ENCODE measurements at regions of chr1 and their contacts with region 1.

Region 1: DNA sequence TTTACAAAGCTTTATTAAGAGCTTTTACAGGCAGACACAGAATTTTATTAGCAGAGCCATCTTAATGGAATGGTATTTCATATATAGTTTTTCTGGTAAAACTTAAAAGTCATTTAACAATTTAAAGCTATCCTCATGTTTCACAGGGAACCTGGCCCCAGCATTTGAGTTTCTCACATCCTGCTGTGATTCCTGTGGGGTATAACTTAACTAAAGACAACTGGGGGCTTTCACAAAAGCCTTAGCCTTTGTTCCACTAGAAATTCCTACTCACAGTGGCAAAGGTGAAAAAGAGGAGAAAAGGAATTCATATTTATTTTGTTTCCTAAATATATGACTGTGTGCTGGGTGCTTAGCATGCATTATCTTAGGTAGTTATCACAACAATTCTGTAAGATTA is 233.9 kb downstream of the DENND1B start:
- DNase-seq: no peak
- H3K4me3 ChIP-seq: no peak overlapping the region
- CTCF ChIP-seq: no peak

Region 2: GRCh38 chr1:197521118-197521739 is 20.2 kb before region 1 on chr1:
- CTCF ChIA-PET with region 1: interaction called, 55 read pairs
- POLR2A ChIA-PET with region 1: no interaction called
- DNase-seq: no peak
- H3K4me3 ChIP-seq: no peak overlapping the region
- CTCF ChIP-seq: peak; percentile 62

Region 3: DNA sequence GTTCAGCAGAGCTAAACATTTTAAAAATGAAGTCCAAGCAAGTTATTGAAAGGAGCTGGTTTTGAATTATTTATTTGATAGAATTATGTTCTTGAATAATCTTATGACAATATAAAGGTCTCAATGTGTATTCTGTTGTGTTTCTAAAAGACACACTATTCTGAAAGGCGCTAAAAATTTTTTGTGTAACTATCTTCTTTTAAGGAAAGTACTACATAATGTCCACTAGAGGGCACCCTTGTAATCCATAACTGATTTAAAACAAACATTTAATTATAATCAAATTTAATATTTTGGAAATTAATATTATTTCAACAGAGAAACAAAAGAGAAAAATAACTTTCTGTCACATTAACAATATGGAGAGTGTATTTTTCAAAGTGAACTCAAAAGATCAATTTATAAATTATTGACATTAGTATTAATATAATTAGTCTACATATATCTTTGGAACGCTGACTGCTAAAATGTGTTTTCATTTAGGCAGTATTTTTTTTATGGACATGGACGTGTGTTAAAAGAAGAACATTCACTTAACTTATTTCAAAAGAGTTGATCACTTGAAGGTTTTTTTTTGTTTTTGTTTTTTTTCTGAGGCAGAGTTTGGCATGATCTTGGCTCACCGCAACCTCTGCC is 14.6 kb before region 1 on chr1:
- CTCF ChIA-PET with region 1: interaction called, 55 read pairs
- POLR2A ChIA-PET with region 1: no interaction called
- DNase-seq: no peak
- H3K4me3 ChIP-seq: no peak overlapping the region
- CTCF ChIP-seq: peak; percentile 2

Region 4: GRCh38 chr1:197577580-197577979 is 36.2 kb after region 1 on chr1:
- CTCF ChIA-PET with region 1: no interaction called
- POLR2A ChIA-PET with region 1: no interaction called
- DNase-seq: peak; percentile 24
- H3K4me3 ChIP-seq: no peak overlapping the region
- CTCF ChIP-seq: no peak

Region 5: DNA sequence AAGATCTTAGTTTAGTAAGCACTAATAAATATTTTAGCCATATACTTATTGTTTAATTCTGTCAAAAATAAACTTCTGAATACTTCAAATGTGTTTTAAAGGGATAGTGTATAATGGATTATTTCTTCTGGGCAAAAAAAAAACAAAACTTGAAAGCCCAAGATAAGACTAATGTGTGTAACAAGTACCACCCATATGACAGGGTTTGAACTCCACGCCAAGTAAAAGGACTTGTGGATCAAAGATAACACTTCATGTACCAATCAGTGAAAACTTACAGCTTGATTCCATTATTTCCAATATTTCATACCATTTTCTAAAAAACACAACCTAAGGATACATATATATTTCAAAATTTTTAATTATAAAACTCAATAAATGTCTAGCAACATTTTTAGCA is 174.4 kb after region 1 on chr1:
- CTCF ChIA-PET with region 1: no interaction called
- POLR2A ChIA-PET with region 1: no interaction called
- DNase-seq: no peak
- H3K4me3 ChIP-seq: no peak overlapping the region
- CTCF ChIP-seq: no peak

Region 6: DNA sequence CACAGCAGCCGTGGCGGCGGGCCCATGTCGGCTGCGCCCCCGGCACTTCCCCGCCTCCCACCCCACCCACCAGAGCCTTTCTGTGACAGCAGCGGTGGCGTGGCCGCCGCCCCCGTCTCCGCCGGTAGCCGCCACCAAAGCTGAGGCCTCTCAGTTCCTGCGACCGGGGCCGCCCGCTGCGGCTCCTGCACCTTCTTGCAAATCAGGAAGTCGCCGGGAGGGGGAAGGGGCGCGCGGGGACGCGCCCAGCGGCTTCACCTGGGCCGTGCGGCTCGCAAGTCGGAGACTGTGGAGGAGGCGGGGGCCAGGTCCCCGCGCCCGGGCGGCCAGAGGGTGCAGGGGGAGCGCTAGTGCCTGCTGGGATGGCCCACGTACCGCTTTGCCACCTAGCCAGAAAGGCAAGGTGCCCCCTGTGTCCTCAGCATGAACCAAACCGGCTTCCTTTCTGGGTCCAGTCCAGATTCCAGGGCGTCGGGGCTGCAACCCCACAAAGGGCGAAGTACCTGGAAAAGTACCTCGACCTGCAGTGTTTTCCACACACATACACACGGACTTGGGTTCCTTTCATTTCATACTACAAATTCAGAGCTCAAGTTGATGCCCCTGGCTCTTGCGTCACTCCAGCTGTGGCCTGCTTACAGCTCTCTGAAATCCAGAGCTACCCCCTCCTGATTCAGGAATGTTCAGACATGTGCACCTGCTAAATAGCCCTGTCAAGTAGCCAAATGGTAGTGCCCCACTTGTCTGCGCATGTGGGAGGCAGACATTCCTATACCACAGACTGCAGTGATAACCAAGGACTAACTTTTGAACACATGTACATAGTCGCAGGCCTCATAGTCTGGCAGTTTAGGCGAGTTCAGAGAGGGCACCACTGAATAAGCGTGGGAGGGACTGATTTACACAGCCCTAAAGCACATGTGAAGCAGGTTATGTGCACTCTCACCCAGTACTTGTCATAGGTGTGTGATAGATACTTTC is 234.2 kb after region 1 on chr1 and contains the start of gene DENND1B:
- CTCF ChIA-PET with region 1: no interaction called
- POLR2A ChIA-PET with region 1: no interaction called
- DNase-seq: peak; percentile 26
- H3K4me3 ChIP-seq: peak within 1 kb of the TSS; percentile 64
- CTCF ChIP-seq: no peak